ENCODE measurements at regions of chr2 and their contacts with region 1.

Region 1: GRCh38 chr2:43559391-43560230 is 36.2 kb downstream of the THADA start:
- DNase-seq: peak; percentile 33
- ATAC-seq: peak; percentile 94
- H3K4me3 Mint-ChIP-seq: peak overlapping the region; percentile 16
- H3K27ac Mint-ChIP-seq: peak overlapping the region; percentile 87
- H3K4me1 Mint-ChIP-seq: peaks cover 53% of the 10 kb centered on the region
- H3K27me3 Mint-ChIP-seq: no peaks in the 10 kb centered on the region

Region 2: GRCh38 chr2:42040643-42041278 is 1518.8 kb before region 1 on chr2:
- CTCF ChIA-PET with region 1: no interaction called
- POLR2A ChIA-PET with region 1: no interaction called
- intact Hi-C with region 1: no loop called
- DNase-seq: no peak
- ATAC-seq: no peak
- H3K4me3 Mint-ChIP-seq: no peak overlapping the region
- H3K27ac Mint-ChIP-seq: no peak overlapping the region
- H3K4me1 Mint-ChIP-seq: no peaks in the 10 kb centered on the region
- H3K27me3 Mint-ChIP-seq: peaks cover 42% of the 10 kb centered on the region

Region 3: DNA sequence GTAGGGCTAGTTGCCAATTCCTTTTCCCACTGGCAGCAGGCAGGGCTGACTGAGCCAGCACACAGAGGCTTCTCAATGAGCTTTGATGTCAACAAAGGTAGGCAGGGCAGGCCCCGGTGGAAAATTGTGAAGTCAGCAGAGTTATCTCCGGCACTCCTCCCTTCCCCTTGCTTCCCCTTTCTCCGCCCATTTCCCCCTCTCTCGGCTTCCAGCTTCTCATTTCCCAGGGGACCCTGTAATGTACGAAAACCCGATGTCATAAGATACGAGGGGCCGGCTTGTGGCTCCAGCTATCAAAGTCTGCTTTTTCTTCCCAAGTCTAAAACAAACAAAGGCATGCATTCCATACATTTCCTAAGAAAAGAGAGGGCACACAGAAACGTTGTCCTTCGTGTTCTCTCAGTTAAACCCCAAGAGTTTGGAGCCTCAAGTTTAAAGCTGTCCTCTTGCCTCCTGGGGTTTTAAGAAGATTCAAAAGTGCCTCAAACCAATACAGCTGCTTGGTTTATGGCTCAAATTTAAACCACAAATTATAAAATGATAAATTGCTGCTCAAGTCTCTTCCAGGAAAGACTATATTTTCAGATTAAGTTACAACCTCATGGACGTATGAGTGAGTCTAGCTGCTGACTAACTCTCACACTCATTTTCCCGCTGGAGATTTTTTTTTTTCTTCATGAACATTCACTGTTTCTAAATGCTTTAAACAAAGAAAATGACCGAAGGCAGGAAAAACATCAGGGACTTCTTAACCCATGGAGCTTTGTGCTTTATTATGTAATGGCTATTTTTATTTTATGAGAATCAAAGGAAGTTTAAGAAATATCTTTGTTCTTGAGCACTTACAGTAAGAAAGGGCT is 1417.7 kb before region 1 on chr2:
- CTCF ChIA-PET with region 1: no interaction called
- POLR2A ChIA-PET with region 1: no interaction called
- intact Hi-C with region 1: no loop called
- DNase-seq: peak; percentile 46
- ATAC-seq: peak; percentile 64
- H3K4me3 Mint-ChIP-seq: peak overlapping the region; percentile 45
- H3K27ac Mint-ChIP-seq: peak overlapping the region; percentile 74
- H3K4me1 Mint-ChIP-seq: peaks cover 47% of the 10 kb centered on the region
- H3K27me3 Mint-ChIP-seq: no peaks in the 10 kb centered on the region

Region 4: DNA sequence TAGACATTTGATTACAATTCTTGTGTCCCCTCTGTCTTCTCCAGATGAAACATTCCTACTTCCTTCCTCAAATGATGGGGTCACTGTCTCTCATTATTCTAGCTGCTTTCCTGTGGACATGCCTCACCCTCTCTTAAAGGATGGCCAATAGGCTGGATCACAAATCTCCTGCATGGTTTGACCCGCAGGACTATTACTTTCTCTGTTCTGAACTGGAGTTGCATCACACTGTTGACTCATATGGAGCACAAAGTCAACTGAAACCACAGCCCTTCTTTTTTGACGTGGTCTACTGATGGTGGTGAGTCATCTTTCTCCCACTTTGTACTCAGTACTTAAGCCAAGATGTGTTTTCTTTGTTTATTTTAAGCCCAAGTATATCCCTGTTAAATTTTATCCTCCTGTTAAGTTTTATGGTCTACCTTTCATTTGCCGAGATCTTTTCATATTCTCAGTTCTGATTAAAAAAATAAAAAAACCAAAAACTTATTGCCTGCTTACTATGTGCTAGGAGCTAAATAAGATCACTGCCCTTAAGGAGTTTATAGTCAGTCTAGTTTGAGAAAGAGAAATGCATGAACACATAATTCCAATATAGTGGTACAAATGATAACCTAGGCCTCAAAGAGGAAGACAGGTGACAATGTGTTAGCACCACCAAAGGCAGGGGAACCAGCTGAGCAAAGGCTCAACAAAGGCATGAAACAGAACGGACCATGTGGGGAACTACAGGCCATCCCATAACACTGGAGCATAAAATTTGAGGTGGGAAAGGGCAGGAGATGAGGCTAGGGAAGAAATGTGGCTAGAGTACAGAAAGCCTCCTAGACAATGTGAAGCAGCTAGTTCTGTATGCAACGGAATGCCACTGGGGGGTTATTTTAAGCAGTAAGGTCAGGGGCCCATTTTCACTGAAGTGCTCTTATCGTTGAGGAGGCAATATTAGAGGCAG is 265.6 kb before region 1 on chr2:
- CTCF ChIA-PET with region 1: no interaction called
- POLR2A ChIA-PET with region 1: no interaction called
- intact Hi-C with region 1: loop called in 1 of 2 experiments (anchors 10 kb)
- DNase-seq: peak; percentile 49
- ATAC-seq: peak; percentile 98
- H3K4me3 Mint-ChIP-seq: peak overlapping the region; percentile 1
- H3K27ac Mint-ChIP-seq: peak overlapping the region; percentile 96
- H3K4me1 Mint-ChIP-seq: peaks cover 21% of the 10 kb centered on the region
- H3K27me3 Mint-ChIP-seq: no peaks in the 10 kb centered on the region

Region 5: DNA sequence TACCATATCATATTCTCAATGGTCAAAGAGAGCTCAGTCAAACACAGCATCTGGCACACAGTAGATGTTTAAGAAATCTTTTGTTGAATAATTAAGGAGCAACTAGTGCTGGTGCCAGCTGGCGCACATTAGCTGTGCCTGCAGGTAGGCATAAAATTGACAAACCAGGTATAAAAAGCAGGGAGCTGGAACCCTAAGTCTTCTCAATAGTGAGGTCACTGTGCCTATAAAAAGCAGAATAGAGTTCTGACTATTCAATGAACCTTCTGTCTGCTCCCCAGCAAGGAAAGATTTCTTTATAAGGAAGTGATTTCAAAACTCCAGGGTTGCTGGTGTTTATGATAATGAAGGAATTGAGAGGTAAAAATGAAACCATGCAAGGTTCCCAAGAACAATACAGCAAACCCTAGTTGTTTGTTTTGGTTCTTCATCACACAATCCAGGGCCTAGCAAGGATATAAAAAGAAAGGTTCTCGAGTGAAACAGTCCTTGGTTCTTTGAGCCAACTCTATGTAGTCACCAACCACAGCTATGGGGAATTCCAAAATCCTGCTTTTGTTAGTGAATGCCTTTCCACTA is 39.9 kb before region 1 on chr2:
- CTCF ChIA-PET with region 1: no interaction called
- POLR2A ChIA-PET with region 1: no interaction called
- intact Hi-C with region 1: no loop called
- DNase-seq: no peak
- ATAC-seq: peak; percentile 48
- H3K4me3 Mint-ChIP-seq: no peak overlapping the region
- H3K27ac Mint-ChIP-seq: no peak overlapping the region
- H3K4me1 Mint-ChIP-seq: peaks cover 34% of the 10 kb centered on the region
- H3K27me3 Mint-ChIP-seq: no peaks in the 10 kb centered on the region

Region 6: GRCh38 chr2:43569921-43570320 is 10.3 kb after region 1 on chr2:
- CTCF ChIA-PET with region 1: interaction called, 54 read pairs
- POLR2A ChIA-PET with region 1: interaction called, 4 read pairs
- intact Hi-C with region 1: loop called in 1 of 2 experiments (anchors 1 kb)
- DNase-seq: peak; percentile 34
- ATAC-seq: peak; percentile 83
- H3K4me3 Mint-ChIP-seq: no peak overlapping the region
- H3K27ac Mint-ChIP-seq: peak overlapping the region; percentile 68
- H3K4me1 Mint-ChIP-seq: peaks cover 49% of the 10 kb centered on the region
- H3K27me3 Mint-ChIP-seq: no peaks in the 10 kb centered on the region

Region 7: GRCh38 chr2:43576981-43577892 is 17.6 kb after region 1 on chr2:
- CTCF ChIA-PET with region 1: interaction called, 54 read pairs
- POLR2A ChIA-PET with region 1: no interaction called
- intact Hi-C with region 1: no loop called
- DNase-seq: peak; percentile 46
- ATAC-seq: peak; percentile 42
- H3K4me3 Mint-ChIP-seq: no peak overlapping the region
- H3K27ac Mint-ChIP-seq: no peak overlapping the region
- H3K4me1 Mint-ChIP-seq: peaks cover 15% of the 10 kb centered on the region
- H3K27me3 Mint-ChIP-seq: no peaks in the 10 kb centered on the region